Caco-2 (cell line): ENCODE measurements at regions of chr18 and their contacts with region 1.

Region 1: GRCh38 chr18:67433971-67434370 is 82.5 kb downstream of the DSEL start:
- DNase-seq: peak; percentile 9 to 22
- H3K4me3 ChIP-seq: no peak overlapping the region
- H3K4me3 Mint-ChIP-seq: no peak overlapping the region
- H3K27ac Mint-ChIP-seq: no peak overlapping the region
- H3K4me1 ChIP-seq: no peaks in the 10 kb centered on the region
- H3K4me1 Mint-ChIP-seq: no peaks in the 10 kb centered on the region
- H3K27me3 ChIP-seq: no peaks in the 10 kb centered on the region
- H3K27me3 Mint-ChIP-seq: no peaks in the 10 kb centered on the region
- CTCF ChIP-seq: no peak

Region 2: GRCh38 chr18:67385455-67385854 is 48.5 kb before region 1 on chr18:
- CTCF ChIA-PET with region 1: no interaction called
- POLR2A ChIA-PET with region 1: no interaction called
- intact Hi-C with region 1: loop called (anchors 2 kb)
- DNase-seq: peak in 1 of 2 experiments; percentile 22
- H3K4me3 ChIP-seq: no peak overlapping the region
- H3K4me3 Mint-ChIP-seq: peak overlapping the region; percentile 48
- H3K27ac Mint-ChIP-seq: peak overlapping the region; percentile 78
- H3K4me1 ChIP-seq: 0 out of 2 replicates have a peak, but pooled peaks cover 8% of the 10 kb centered on the region
- H3K4me1 Mint-ChIP-seq: peaks cover 9% of the 10 kb centered on the region
- H3K27me3 ChIP-seq: no peaks in the 10 kb centered on the region
- H3K27me3 Mint-ChIP-seq: no peaks in the 10 kb centered on the region
- CTCF ChIP-seq: no peak

Region 3: GRCh38 chr18:67402543-67402942 is 31.4 kb before region 1 on chr18:
- CTCF ChIA-PET with region 1: no interaction called
- POLR2A ChIA-PET with region 1: no interaction called
- intact Hi-C with region 1: no loop called
- DNase-seq: no peak
- H3K4me3 ChIP-seq: no peak overlapping the region
- H3K4me3 Mint-ChIP-seq: no peak overlapping the region
- H3K27ac Mint-ChIP-seq: no peak overlapping the region
- H3K4me1 ChIP-seq: no peaks in the 10 kb centered on the region
- H3K4me1 Mint-ChIP-seq: no peaks in the 10 kb centered on the region
- H3K27me3 ChIP-seq: no peaks in the 10 kb centered on the region
- H3K27me3 Mint-ChIP-seq: no peaks in the 10 kb centered on the region
- CTCF ChIP-seq: no peak

Region 4: GRCh38 chr18:67735506-67735905 is 301.5 kb after region 1 on chr18:
- CTCF ChIA-PET with region 1: no interaction called
- POLR2A ChIA-PET with region 1: no interaction called
- intact Hi-C with region 1: no loop called
- DNase-seq: no peak
- H3K4me3 ChIP-seq: no peak overlapping the region
- H3K4me3 Mint-ChIP-seq: no peak overlapping the region
- H3K27ac Mint-ChIP-seq: no peak overlapping the region
- H3K4me1 ChIP-seq: no peaks in the 10 kb centered on the region
- H3K4me1 Mint-ChIP-seq: no peaks in the 10 kb centered on the region
- H3K27me3 ChIP-seq: no peaks in the 10 kb centered on the region
- H3K27me3 Mint-ChIP-seq: peaks cover 6% of the 10 kb centered on the region
- CTCF ChIP-seq: no peak